ENCODE measurements at regions of chr4 and their contacts with region 1.

Region 1: GRCh38 chr4:118270492-118270891 is 82.3 kb downstream of the PRSS12 start:
- DNase-seq: peak; percentile 64
- H3K4me3 ChIP-seq: no peak overlapping the region
- H3K27ac ChIP-seq: no peak overlapping the region
- H3K4me1 ChIP-seq: no peaks in the 10 kb centered on the region
- H3K27me3 ChIP-seq: no peaks in the 10 kb centered on the region; the same call in 1 of the 2 replicates

Region 2: GRCh38 chr4:116358588-116359222 is 1911.8 kb before region 1 on chr4:
- in situ Hi-C with region 1: loop called (anchors 25 kb)
- DNase-seq: peak; percentile 72
- H3K4me3 ChIP-seq: no peak overlapping the region
- H3K27ac ChIP-seq: no peak overlapping the region
- H3K4me1 ChIP-seq: no peaks in the 10 kb centered on the region
- H3K27me3 ChIP-seq: no peaks in the 10 kb centered on the region

Region 3: GRCh38 chr4:117987464-117987863 is 283.0 kb before region 1 on chr4:
- in situ Hi-C with region 1: no loop called
- DNase-seq: no peak
- H3K4me3 ChIP-seq: no peak overlapping the region
- H3K27ac ChIP-seq: no peak overlapping the region
- H3K4me1 ChIP-seq: no peaks in the 10 kb centered on the region
- H3K27me3 ChIP-seq: no peaks in the 10 kb centered on the region